HEK293T (cell line): ENCODE measurements at regions of chr12 and their contacts with region 1.

Region 1: DNA sequence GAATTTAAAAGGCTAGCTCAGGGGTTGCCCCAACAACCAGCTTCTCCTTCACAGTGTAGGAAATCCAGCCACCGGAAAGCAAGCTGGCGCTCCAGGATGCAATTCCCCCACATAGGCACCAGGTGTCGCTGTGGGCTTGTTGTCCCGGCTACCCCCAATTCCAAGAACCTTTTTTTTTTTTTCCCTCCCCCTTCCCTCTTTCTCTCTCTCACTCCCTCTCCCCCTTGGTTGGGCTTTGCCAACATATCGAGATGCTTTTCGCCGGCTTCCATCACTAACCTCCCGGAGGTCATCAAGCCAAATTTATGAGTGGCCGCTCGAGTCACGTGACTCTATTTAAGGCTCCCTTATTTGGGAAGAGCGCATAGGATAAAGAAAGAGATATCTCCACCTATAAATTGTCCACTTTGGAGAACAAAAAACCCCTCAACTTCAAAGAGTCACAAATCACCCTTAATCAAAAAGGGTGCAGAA is at the start of gene HOXC5:
- DNase-seq: peak; percentile 68

Region 2: GRCh38 chr12:53938326-53939140 is 94.1 kb before region 1 on chr12 and contains the start of gene HOXC13:
- CTCF ChIA-PET with region 1: no interaction called
- POLR2A ChIA-PET with region 1: no interaction called
- DNase-seq: peak; percentile 98

Region 3: DNA sequence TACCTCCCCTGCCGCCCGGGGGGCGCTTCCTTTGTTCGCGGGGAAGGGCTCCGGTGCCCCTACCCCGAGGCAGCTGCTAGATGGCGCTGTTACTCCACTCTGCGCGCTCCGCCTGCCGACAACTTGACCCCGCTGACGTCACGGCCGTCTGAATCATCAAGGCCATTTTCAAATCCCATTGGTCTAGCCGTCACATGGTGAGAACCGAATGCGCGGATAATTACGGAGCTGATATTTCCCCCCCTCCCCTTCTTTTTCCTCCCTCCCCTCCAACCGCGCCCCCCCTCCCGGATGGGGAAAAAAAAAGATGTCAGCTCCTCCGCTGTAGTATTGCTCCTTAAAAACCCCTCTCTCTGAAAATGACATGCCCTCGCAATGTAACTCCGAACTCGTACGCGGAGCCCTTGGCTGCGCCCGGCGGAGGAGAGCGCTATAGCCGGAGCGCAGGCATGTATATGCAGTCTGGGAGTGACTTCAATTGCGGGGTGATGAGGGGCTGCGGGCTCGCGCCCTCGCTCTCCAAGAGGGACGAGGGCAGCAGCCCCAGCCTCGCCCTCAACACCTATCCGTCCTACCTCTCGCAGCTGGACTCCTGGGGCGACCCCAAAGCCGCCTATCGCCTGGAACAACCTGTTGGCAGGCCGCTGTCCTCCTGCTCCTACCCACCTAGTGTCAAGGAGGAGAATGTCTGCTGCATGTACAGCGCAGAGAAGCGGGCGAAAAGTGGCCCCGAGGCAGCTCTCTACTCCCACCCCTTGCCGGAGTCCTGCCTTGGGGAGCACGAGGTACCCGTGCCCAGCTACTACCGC is 47.6 kb before region 1 on chr12 and contains the start of gene HOXC10:
- CTCF ChIA-PET with region 1: interaction called, 11 read pairs
- POLR2A ChIA-PET with region 1: interaction called, 3 read pairs
- DNase-seq: peak; percentile 85

Region 4: DNA sequence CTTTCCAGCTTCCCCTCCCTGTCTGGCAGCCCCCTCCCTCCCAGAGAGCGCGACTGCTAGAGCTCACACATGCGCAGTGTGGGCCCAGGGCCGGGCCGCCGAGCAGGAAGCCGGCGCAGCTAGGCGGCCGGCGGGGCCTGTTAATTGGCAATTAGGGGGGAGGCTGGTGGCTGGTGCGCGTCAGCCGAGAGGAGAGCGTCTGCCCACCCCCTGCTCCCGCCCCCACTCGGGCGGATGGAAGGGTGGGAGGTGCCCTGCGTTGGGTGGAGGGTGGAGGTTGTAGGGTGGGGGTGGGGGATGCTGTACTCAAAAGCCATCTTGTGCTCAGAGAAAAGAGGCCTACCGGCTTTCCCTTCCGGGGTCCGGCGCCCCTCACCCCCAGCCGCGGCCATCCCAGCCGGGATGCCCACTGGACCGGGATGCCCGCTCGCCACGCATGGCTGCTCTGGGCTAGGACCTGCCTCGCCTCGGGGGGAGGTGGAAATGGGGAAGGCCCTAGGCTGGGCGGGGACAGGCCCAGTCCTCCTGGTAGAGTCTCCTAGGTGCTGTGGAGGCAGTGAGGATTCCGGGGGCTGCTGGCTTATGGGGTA is 14.7 kb before region 1 on chr12:
- CTCF ChIA-PET with region 1: interaction called, 13 read pairs
- POLR2A ChIA-PET with region 1: interaction called, 26 read pairs
- DNase-seq: peak; percentile 90

Region 5: GRCh38 chr12:54060975-54061778 is 28.5 kb after region 1 on chr12:
- CTCF ChIA-PET with region 1: no interaction called
- POLR2A ChIA-PET with region 1: interaction called, 15 read pairs
- DNase-seq: no peak

Region 6: GRCh38 chr12:54201001-54201794 is 168.5 kb after region 1 on chr12:
- CTCF ChIA-PET with region 1: interaction called, 11 read pairs
- POLR2A ChIA-PET with region 1: interaction called, 3 read pairs
- DNase-seq: peak; percentile 82